ENCODE measurements at regions of chr1 and their contacts with region 1.

Region 1: GRCh38 chr1:50348449-50349241 is 74.6 kb downstream of the DMRTA2 start:
- DNase-seq: no peak
- ATAC-seq: peak; percentile 62

Region 2: GRCh38 chr1:48677306-48678287 is 1671.0 kb before region 1 on chr1:
- intact Hi-C with region 1: loop called (anchors 5 kb)
- DNase-seq: peak; percentile 82
- ATAC-seq: peak; percentile 57

Region 3: DNA sequence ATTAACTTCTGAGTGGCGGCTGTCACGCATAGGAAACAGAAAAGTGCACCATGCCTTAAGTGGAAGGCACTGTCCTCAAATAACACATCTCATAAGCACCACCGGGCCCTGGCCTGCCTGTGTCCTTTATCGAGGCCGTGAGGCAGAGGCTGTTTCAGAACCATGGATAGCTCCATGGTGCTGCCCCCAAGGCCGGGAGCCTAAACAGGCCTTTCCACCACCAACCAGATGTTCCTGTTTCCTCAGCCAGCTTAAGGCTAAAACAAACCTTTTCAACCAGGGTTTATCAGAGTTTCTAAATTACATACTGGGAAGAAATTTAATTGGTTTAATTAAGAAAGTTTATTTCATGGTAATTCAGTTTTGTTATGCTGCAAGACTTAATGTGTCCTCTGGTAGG is 39.8 kb before region 1 on chr1:
- intact Hi-C with region 1: no loop called
- DNase-seq: no peak
- ATAC-seq: no peak

Measured in Right ventricle myocardium inferior (tissue), 1 donor.